SK-MEL-5 (cell line): ENCODE measurements at regions of chr12 and their contacts with region 1.

Region 1: GRCh38 chr12:53618275-53618674 is 7.9 kb downstream of the ATF7 start:
- DNase-seq: no peak

Region 2: DNA sequence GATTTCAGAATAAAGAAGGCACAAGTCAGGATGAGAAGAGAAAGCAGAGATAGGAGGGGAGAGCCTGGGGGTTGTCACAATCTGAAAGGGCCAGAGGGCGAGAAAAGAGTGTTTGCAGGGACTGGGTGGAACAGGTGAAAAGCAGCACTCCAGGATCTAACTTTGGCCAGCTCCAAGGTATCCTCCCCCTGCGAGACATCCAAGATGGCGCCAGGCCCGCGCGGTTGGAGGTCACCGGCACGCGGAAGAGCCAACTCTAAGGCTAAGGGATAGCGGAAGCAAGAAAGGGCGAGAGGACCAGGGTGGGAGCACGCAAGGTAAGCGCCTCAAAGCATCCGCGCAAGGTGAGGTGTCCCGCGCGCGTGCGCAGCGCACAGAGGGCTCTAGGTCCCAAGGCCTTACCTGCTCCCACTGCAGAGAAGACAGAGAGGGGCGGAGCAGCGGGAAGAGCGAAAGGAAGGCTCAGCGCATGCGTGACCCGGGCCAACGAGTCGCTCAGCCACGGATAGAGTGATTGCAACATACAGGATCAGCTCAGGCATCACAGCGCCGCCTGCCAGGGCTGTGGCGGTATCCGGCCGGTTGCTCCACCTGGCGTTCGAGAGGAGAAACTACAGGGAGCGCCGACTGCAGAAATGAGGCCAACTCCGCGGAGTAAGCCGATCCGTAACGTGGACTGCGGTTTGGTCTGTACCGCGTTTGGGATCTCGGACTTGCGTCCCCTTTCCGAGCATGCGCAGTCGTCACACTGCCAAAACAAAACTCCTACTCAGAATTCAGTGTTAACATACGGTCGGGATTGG is 57.6 kb after region 1 on chr12 and contains the start of gene ATP5MC2:
- in situ Hi-C with region 1: loop called (anchors 10 kb)
- DNase-seq: peak; percentile 99
- total RNA-seq, gene ATP5MC2: 503 and 579 TPM in 2 replicates

Region 3: GRCh38 chr12:53825246-53826081 is 207.2 kb after region 1 on chr12:
- in situ Hi-C with region 1: no loop called
- DNase-seq: no peak